Endothelial cell of umbilical vein (primary cell): ENCODE measurements at regions of chr11 and their contacts with region 1.

Region 1: GRCh38 chr11:102733232-102733875 is 8.6 kb upstream of the MMP8 start:
- DNase-seq: peak; percentile 64
- H3K4me3 ChIP-seq: no peak overlapping the region
- H3K27ac ChIP-seq: no peak overlapping the region
- H3K4me1 ChIP-seq: peaks cover 26% of the 10 kb centered on the region
- H3K27me3 ChIP-seq: no peaks in the 10 kb centered on the region
- CTCF ChIP-seq: peak; percentile 76 to 89
- POLR2A ChIP-seq: no peak

Region 2: DNA sequence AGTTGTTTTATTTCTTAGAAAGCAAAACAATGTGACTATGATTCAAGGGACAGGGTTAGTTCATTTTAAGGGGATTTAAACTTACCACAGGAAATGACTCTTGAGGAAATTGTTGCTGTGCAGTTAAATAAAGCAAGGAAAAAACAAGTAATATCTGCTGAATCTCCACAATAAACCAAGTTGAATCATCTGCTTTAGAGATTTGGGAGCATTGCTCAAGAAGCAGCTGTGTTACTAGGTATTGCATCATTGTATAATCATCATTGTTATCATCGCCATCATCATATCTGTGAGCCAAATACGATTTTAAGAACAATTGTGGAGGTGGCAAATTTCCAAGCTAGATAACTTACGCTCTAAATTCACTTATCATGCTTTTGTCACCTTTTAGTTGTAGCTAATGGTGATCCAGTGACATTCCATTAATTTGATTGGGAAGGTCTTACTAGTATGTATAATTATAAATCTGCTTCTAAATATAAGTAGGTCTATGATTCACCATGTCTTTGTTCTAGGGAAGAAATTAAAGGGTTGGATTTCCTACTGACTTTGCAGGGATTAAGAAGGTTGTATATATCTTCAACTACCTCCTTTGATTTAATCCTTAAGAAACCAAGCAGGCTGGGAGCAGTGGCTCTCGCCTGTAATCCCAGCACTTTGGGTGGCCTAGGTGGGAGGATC is 27.1 kb after region 1 on chr11:
- CTCF ChIA-PET with region 1: interaction called, 11 read pairs
- POLR2A ChIA-PET with region 1: no interaction called
- dilution Hi-C with region 1: no loop called
- intact Hi-C with region 1: loop called (anchors 1 kb)
- DNase-seq: peak; percentile 96
- H3K4me3 ChIP-seq: no peak overlapping the region
- H3K27ac ChIP-seq: peak overlapping the region; percentile 88
- H3K4me1 ChIP-seq: peaks cover 50% of the 10 kb centered on the region
- H3K27me3 ChIP-seq: peaks cover 0 to 3% of the 10 kb centered on the region in 2 experiments
- CTCF ChIP-seq: no peak
- POLR2A ChIP-seq: peak; percentile 41

Region 3: DNA sequence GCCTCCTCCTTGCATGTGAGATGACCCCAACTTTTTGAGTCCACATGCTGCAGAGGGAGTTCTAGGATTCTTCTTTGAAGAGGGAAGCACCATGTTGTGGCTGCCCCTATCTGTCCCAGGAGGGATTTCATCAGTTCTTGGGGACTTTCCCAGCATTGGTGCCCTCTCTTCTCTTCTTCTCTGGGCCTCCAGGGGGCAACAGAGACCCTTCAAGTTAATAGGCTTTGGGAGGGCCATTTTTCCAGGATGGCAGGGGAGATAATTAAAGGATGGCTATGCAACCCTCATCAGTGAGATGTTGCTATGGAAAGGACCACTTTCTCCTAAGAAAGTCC is 61.1 kb after region 1 on chr11:
- CTCF ChIA-PET with region 1: interaction called, 8 read pairs
- POLR2A ChIA-PET with region 1: no interaction called
- dilution Hi-C with region 1: no loop called
- intact Hi-C with region 1: loop called (anchors 1 kb)
- DNase-seq: peak; percentile 48
- H3K4me3 ChIP-seq: no peak overlapping the region
- H3K27ac ChIP-seq: no peak overlapping the region
- H3K4me1 ChIP-seq: peaks cover 17% of the 10 kb centered on the region
- H3K27me3 ChIP-seq: no peaks in the 10 kb centered on the region
- CTCF ChIP-seq: peak; percentile 60 to 66
- POLR2A ChIP-seq: no peak

Region 4: GRCh38 chr11:102914238-102915043 is 181.1 kb after region 1 on chr11:
- CTCF ChIA-PET with region 1: interaction called, 9 read pairs
- POLR2A ChIA-PET with region 1: no interaction called
- dilution Hi-C with region 1: no loop called
- intact Hi-C with region 1: loop called (anchors 1 kb)
- DNase-seq: peak; percentile 53
- H3K4me3 ChIP-seq: no peak overlapping the region
- H3K27ac ChIP-seq: no peak overlapping the region
- H3K4me1 ChIP-seq: no peaks in the 10 kb centered on the region
- H3K27me3 ChIP-seq: no peaks in the 10 kb centered on the region
- CTCF ChIP-seq: peak; percentile 47 to 70
- POLR2A ChIP-seq: no peak

Region 5: DNA sequence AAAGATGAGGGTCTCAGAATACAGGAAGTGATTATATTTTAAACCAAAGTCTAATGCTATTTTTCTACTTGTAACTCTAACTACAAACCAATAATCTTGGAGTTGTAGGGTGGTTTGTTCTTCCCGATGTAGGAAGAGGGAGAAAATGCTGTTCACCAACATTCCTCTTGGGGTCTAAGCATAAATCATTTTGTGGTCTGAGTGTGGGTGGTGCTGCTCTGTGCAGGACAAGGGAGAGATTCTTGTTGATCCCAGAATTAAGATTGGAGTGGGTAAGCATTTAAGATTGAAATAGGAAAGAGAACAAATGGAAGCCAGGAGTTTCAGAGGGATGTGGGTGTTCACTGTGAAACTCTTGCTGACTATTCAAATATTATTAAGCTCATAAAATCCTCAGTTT is 260.8 kb after region 1 on chr11:
- CTCF ChIA-PET with region 1: no interaction called
- POLR2A ChIA-PET with region 1: no interaction called
- dilution Hi-C with region 1: no loop called
- intact Hi-C with region 1: loop called (anchors 1 kb)
- DNase-seq: no peak
- H3K4me3 ChIP-seq: no peak overlapping the region
- H3K27ac ChIP-seq: no peak overlapping the region
- H3K4me1 ChIP-seq: peaks cover 37% of the 10 kb centered on the region
- H3K27me3 ChIP-seq: no peaks in the 10 kb centered on the region
- CTCF ChIP-seq: no peak
- POLR2A ChIP-seq: no peak

Region 6: DNA sequence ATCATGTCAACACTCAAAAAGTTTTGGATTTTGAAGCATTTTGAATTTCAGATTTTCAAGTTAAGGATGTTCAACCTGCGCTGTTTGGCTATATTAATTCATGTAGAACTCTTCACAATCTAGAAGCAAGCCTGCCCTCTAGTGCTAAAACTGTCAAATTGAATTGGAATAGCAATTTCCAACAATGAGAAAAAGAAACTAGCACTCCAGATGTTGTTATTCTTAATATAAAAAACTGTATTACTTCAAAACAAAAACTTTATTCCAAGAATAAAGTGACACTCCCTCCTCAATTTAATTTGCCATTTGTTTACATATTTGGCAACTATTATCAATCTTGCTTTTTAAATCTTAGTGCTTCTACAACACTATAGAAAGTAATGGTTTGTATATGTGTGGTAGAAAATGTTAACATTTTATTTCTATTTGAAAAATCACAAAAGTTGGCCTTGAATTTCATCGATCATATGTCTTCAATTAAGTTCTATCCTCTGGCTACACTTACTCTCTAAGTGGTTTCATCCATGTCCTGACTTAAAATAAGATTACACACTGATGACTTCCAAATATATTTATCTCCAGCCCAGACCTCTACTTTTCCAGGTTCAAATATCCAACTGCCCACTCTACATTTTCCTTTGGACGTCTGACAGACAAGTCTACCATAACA is 322.0 kb after region 1 on chr11:
- CTCF ChIA-PET with region 1: interaction called, 3 read pairs
- POLR2A ChIA-PET with region 1: no interaction called
- dilution Hi-C with region 1: no loop called
- intact Hi-C with region 1: loop called (anchors 1 kb)
- DNase-seq: peak; percentile 54
- H3K4me3 ChIP-seq: no peak overlapping the region
- H3K27ac ChIP-seq: no peak overlapping the region
- H3K4me1 ChIP-seq: no peaks in the 10 kb centered on the region
- H3K27me3 ChIP-seq: no peaks in the 10 kb centered on the region
- CTCF ChIP-seq: peak; percentile 43 to 45
- POLR2A ChIP-seq: no peak